ENCODE measurements at regions of chr2 and their contacts with region 1.

Region 1: GRCh38 chr2:195559431-195559914 is 97.6 kb upstream of the SLC39A10 start:
- DNase-seq: peak; percentile 91
- H3K4me3 Mint-ChIP-seq: peak overlapping the region; percentile 74
- H3K27ac Mint-ChIP-seq: peak overlapping the region; percentile 99
- H3K4me1 Mint-ChIP-seq: peaks cover 71% of the 10 kb centered on the region
- H3K27me3 Mint-ChIP-seq: no peaks in the 10 kb centered on the region

Region 2: GRCh38 chr2:195312662-195313061 is 246.8 kb before region 1 on chr2:
- CTCF ChIA-PET with region 1: no interaction called
- POLR2A ChIA-PET with region 1: no interaction called
- DNase-seq: no peak
- H3K4me3 Mint-ChIP-seq: no peak overlapping the region
- H3K27ac Mint-ChIP-seq: no peak overlapping the region
- H3K4me1 Mint-ChIP-seq: no peaks in the 10 kb centered on the region
- H3K27me3 Mint-ChIP-seq: peaks cover 5% of the 10 kb centered on the region

Region 3: GRCh38 chr2:195486987-195487644 is 72.4 kb before region 1 on chr2:
- CTCF ChIA-PET with region 1: interaction called, 6 read pairs
- POLR2A ChIA-PET with region 1: interaction called, 44 read pairs
- DNase-seq: peak; percentile 30
- H3K4me3 Mint-ChIP-seq: peak overlapping the region; percentile 38
- H3K27ac Mint-ChIP-seq: peak overlapping the region; percentile 84
- H3K4me1 Mint-ChIP-seq: peaks cover 35% of the 10 kb centered on the region
- H3K27me3 Mint-ChIP-seq: no peaks in the 10 kb centered on the region

Region 4: DNA sequence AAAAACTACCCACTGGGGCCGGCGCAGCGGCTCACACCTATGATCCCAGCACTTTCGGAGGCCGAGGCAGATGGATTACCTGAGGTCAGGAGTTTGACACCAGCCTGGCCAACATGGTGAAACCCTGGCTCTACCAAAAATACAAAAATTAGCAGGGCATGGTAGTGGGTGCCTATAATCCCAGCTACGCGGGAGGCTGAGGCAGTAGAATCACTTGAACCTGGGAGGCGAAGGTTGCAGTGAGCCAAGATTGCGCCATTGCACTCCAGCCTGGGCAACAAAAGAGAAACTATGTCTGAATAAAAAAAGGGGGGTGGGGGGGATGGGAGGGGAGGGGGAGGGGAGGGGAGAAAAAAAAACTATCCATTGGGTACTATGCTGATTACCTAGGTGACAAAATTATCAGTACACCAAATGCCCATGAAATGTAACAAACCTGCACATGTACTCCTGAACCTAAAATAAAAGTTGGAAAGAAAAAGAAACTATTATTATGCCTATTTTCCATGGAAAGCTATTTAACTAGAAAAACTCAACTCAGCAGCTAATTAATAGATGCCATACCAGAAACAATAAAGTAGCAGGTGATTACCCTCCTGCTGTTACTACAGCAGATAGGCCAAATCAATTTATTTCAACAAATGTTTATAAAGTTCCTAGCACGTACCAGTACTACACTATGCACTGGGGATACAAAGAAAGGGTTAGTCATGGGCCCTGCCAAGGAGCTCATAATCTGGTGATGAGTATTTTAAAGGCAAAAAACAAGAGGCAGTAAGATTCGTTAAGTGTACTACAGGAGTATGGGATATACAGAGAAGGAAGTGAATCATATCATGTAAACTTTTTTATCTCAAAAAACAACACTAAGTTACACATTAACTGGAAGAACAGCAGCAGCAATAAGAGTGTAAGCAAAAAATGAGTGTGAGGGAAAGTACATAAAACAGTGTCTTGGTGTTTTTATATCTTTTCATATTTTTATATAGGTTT is 15.3 kb before region 1 on chr2:
- CTCF ChIA-PET with region 1: interaction called, 9 read pairs
- POLR2A ChIA-PET with region 1: interaction called, 824 read pairs
- DNase-seq: no peak
- H3K4me3 Mint-ChIP-seq: peak overlapping the region; percentile 6
- H3K27ac Mint-ChIP-seq: peak overlapping the region; percentile 87
- H3K4me1 Mint-ChIP-seq: peaks cover 75% of the 10 kb centered on the region
- H3K27me3 Mint-ChIP-seq: no peaks in the 10 kb centered on the region